PC-9 (cell line): ENCODE measurements at regions of chr20 and their contacts with region 1.

Region 1: GRCh38 chr20:8722276-8722928 is 346.5 kb upstream of the PLCB4 start:
- DNase-seq: peak; percentile 9 to 41
- H3K4me3 ChIP-seq: no peak overlapping the region
- H3K27ac ChIP-seq: no peak overlapping the region
- H3K4me1 ChIP-seq: no peaks in the 10 kb centered on the region
- H3K27me3 ChIP-seq: peaks cover 17% of the 10 kb centered on the region; the same call in 1 of the 2 replicates
- CTCF ChIP-seq: peak; percentile 81

Region 2: GRCh38 chr20:6767536-6768227 is 1954.7 kb before region 1 on chr20 and contains the start of gene BMP2:
- CTCF ChIA-PET with region 1: no interaction called
- POLR2A ChIA-PET with region 1: no interaction called
- intact Hi-C with region 1: loop called (anchors 10 kb)
- DNase-seq: no peak
- H3K4me3 ChIP-seq: no peak within 1 kb of the TSS; the same call in 1 of the 2 replicates
- H3K27ac ChIP-seq: no peak within 1 kb of the TSS
- H3K4me1 ChIP-seq: no peaks in the 10 kb centered on the region
- H3K27me3 ChIP-seq: no peaks in the 10 kb centered on the region; the same call in 1 of the 2 replicates
- CTCF ChIP-seq: no peak
- total RNA-seq, gene BMP2: not detected in 2 replicates

Region 3: GRCh38 chr20:6828794-6829423 is 1893.5 kb before region 1 on chr20:
- CTCF ChIA-PET with region 1: no interaction called
- POLR2A ChIA-PET with region 1: no interaction called
- intact Hi-C with region 1: loop called (anchors 5 kb)
- DNase-seq: peak in 1 of 2 experiments; percentile 13
- H3K4me3 ChIP-seq: no peak overlapping the region
- H3K27ac ChIP-seq: no peak overlapping the region
- H3K4me1 ChIP-seq: no peaks in the 10 kb centered on the region
- H3K27me3 ChIP-seq: no peaks in the 10 kb centered on the region; the same call in 1 of the 2 replicates
- CTCF ChIP-seq: peak; percentile 80

Region 4: GRCh38 chr20:7935027-7935551 is 787.3 kb before region 1 on chr20:
- CTCF ChIA-PET with region 1: interaction called, 13 read pairs
- POLR2A ChIA-PET with region 1: no interaction called
- intact Hi-C with region 1: loop called (anchors 1 kb)
- DNase-seq: no peak
- H3K4me3 ChIP-seq: no peak overlapping the region
- H3K27ac ChIP-seq: no peak overlapping the region
- H3K4me1 ChIP-seq: no peaks in the 10 kb centered on the region
- H3K27me3 ChIP-seq: no peaks in the 10 kb centered on the region; the same call in 1 of the 2 replicates
- CTCF ChIP-seq: no peak

Region 5: DNA sequence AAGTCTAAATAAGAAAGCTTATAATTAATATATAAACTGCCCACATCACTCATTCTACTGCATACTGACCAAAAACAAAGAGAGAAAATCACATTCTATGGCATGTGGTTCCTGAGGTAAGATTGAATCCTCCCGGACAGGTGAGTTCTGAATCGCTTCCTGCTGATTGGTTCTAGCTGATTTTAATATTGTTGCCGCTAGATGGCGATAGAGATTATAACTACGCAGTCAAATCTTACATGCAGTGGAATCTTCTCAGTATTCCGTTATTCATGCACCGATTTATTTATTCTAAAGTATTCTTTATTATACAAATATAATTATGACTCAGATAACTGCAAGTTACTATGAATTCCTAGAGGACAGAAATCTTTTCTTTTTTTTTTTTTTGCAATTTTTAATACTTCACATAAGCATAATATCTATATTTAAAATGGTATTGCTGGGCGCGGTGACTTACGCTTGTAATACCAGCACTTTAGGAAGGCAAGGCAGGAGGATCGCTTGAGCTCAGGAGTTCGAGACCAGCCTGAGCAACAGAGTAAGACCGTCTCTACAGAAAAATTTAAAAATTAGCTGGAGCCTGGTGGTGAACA is 678.6 kb before region 1 on chr20:
- CTCF ChIA-PET with region 1: no interaction called
- POLR2A ChIA-PET with region 1: no interaction called
- intact Hi-C with region 1: loop called (anchors 2 kb)
- DNase-seq: peak; percentile 12 to 44
- H3K4me3 ChIP-seq: no peak overlapping the region
- H3K27ac ChIP-seq: no peak overlapping the region
- H3K4me1 ChIP-seq: peaks cover 10% of the 10 kb centered on the region; the same call in 1 of the 2 replicates
- H3K27me3 ChIP-seq: peaks cover 3% of the 10 kb centered on the region; the same call in 1 of the 2 replicates
- CTCF ChIP-seq: peak; percentile 87

Region 6: GRCh38 chr20:8344106-8344505 is 378.3 kb before region 1 on chr20:
- CTCF ChIA-PET with region 1: no interaction called
- POLR2A ChIA-PET with region 1: no interaction called
- intact Hi-C with region 1: no loop called
- DNase-seq: no peak
- H3K4me3 ChIP-seq: no peak overlapping the region
- H3K27ac ChIP-seq: no peak overlapping the region
- H3K4me1 ChIP-seq: no peaks in the 10 kb centered on the region
- H3K27me3 ChIP-seq: no peaks in the 10 kb centered on the region
- CTCF ChIP-seq: no peak